ENCODE measurements at regions of chr9 and their contacts with region 1.

Region 1: DNA sequence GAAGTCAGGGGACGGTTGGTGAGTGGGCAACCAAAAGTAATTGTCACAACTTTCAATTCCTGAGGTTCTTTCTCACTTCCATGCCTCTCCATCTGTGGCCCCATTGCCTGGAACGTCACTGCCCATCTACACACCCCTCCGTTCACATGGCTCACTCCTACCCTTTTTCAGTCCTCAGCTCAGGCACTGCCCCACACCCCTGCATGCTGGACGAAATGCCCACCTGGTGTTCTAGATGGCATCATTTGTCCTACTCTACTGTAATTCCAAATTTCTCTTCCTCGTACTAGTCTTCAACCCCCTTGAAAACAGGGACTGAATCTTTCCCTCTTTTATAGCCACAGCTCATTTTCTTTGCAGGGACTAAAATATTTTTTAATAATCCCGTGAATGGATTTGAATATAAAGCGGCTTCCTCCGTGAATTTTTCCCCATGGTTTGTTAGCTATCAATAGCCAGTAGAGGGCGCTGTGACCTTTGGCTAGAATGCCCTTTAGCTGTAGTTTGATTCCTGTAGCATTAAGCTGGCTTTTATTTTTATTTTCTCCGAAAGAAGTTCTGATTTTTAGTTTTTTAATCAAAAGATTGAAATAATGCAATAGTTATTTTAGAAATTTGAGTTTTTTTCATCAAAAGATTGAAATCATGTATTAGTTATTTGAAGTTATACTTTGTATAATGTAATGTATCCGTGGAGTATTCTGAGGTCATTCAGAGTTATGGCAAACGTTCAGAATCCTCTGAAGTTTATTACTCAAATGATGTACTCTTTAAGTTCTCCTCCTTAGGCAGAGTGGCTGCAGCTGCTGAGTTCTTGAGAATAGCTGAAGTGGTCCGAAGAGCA is 232.1 kb downstream of the SH3GL2 start:
- DNase-seq: peak; percentile 36
- CTCF ChIP-seq: peak; percentile 87

Region 2: GRCh38 chr9:17789316-17789715 is 21.6 kb before region 1 on chr9:
- CTCF ChIA-PET with region 1: interaction called, 12 read pairs
- POLR2A ChIA-PET with region 1: no interaction called
- DNase-seq: no peak
- CTCF ChIP-seq: no peak

Region 3: DNA sequence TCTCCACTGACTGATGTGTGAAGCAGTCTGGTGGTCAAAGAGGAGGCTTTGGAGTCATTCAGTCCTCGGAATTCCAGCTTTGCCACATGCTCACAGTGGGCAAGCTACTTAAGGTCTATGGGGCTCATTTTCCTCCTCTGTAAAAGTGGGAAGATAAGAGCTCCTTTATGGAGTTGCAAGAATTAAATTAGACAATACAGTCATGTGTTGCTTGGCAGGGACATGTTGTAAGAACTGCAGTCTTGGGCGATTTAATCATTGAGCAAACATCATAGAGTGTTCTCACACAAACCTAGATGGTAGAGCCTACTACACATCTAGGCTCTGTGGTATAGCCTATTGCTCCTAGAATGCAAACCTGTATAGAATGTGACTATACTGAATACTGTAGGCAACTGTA is 21.9 kb after region 1 on chr9:
- CTCF ChIA-PET with region 1: interaction called, 19 read pairs
- POLR2A ChIA-PET with region 1: no interaction called
- DNase-seq: no peak
- CTCF ChIP-seq: no peak

Region 4: DNA sequence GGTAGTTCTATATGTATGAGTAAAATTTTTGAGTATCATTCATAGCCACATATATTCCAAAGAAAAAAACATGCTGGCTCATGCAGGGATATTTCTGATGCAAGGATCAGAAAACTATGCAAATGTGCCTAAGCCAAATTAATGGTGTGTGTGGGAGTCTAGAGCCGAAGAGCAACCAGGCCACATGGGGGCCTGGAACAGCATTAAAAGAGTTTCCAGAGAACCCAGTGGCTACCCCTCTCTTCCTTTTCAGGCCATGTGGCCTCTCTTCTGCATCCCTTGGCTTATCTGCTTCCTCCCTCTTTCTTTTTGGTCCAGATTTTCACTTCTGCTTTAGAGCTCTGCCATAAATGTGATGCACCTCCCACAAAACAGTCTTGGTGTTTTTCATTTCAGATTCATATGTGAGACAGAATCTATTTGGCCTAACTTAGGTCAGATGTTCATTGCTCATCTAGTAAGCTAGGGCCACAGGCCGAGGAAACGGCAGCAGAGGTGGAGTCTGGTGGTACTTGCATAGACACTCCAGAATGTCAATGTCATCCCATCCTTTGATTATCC is 67.9 kb after region 1 on chr9:
- CTCF ChIA-PET with region 1: no interaction called
- POLR2A ChIA-PET with region 1: no interaction called
- DNase-seq: no peak
- CTCF ChIP-seq: no peak

Region 5: GRCh38 chr9:18215626-18216025 is 404.7 kb after region 1 on chr9:
- CTCF ChIA-PET with region 1: interaction called, 93 read pairs
- POLR2A ChIA-PET with region 1: no interaction called
- DNase-seq: no peak
- CTCF ChIP-seq: no peak

Region 6: DNA sequence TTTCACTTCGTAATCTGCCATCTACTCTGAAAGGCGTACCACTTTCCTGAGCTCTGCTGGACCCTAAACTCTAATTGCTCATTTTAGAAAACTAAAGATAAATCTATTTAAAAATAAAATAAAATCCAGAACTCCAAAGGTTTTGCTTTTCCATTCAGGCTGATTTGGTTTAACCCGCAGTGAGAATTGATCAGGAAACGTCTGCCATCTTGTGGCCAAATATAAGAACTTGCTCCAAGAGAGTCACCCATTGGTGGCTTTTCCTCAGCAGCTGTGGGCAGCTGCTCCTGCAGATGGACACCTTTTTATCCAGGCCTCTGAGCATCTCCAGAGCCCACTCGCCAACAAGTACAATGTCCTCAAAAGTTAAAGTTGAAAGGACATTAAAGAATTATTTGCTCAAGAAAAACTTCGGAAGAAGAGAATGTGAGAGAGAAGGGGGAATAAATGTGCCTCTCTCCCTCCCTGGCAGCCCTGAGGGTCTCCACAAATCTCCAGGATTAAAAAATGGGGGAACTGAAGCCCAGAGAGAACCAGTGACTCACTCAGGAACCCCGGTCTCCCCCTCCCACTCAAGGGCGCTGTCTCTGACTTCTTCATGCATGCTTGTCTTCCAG is 1218.0 kb after region 1 on chr9:
- CTCF ChIA-PET with region 1: interaction called, 12 read pairs
- POLR2A ChIA-PET with region 1: no interaction called
- DNase-seq: peak; percentile 76
- CTCF ChIP-seq: peak; percentile 63

Measured in GM10248 (cell line).